ENCODE measurements at regions of chr2 and their contacts with region 1.

Region 1: DNA sequence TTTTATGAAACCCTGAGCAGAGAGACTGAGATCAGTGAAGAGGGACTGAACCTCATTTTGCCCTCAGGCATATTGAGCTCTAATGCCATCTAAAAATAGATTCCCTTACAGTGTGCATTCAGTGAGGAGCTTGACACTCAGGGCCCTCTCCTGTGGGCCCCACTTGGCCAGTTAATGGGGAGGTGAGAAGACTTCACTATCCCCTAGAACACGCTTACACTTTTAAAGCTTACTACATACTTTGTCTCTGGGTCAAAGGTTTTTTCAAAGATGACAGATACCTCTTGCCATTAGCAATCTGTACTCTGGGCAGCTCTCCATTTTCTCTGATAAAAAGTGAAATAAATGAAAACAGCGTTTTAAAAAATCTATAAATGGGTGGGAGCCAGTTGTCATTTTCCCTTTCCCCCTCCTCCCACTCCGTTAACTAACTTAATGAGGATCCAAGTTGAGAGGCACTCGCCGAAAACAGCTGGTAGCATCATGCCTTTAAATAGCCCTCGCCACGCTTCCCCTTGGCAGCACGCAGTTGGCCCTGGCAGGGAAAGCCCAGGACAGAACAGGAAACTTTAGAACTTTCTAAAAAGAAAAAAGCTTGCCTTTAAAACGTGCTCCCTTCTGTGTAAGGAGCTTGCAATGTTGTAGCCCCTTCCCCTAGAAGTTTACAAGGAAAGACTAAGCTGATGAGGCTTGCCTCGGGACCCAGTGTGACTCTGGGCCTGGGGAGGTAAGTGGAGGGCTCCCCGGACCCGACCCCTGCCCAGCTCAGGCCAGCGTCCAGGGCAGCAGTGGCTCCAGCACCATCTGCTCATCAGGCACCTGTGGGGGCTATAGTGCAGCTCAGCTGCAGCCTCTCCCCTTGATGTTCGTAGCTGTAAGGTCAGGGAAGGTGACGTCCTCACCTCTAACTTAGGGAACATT is 58.8 kb upstream of the FOSL2 start:
- DNase-seq: peak; percentile 81 to 90
- ATAC-seq: peak; percentile 79 to 82
- H3K4me3 ChIP-seq: peak overlapping the region in 1 of 4 donors; percentile 2
- H3K27ac ChIP-seq: peak overlapping the region; percentile 94 to 97 (median 96)
- H3K4me1 ChIP-seq: peaks cover 65% of the 10 kb centered on the region in 2 donors
- H3K27me3 ChIP-seq: no peaks in the 10 kb centered on the region
- CTCF ChIP-seq: no peak
- POLR2A ChIP-seq: peak; percentile 35 to 63

Region 2: GRCh38 chr2:27903649-27904404 is 430.0 kb before region 1 on chr2:
- in situ Hi-C with region 1: no loop called
- intact Hi-C with region 1: loop called (anchors 5 kb)
- DNase-seq: peak in 1 of 2 donors; percentile 34
- ATAC-seq: peak; percentile 35 to 50
- H3K4me3 ChIP-seq: no peak overlapping the region
- H3K27ac ChIP-seq: peak overlapping the region; percentile 74 to 86 (median 80)
- H3K4me1 ChIP-seq: peaks cover 42 to 46% of the 10 kb centered on the region in 2 donors
- H3K27me3 ChIP-seq: no peaks in the 10 kb centered on the region
- CTCF ChIP-seq: no peak
- POLR2A ChIP-seq: no peak

Region 3: GRCh38 chr2:27954771-27955383 is 379.0 kb before region 1 on chr2:
- in situ Hi-C with region 1: no loop called
- intact Hi-C with region 1: loop called (anchors 1 kb)
- DNase-seq: peak; percentile 70 to 78
- ATAC-seq: peak; percentile 90 to 93
- H3K4me3 ChIP-seq: peak overlapping the region in 2 of 4 donors; percentile 3 to 6
- H3K27ac ChIP-seq: peak overlapping the region; percentile 72 to 81 (median 76)
- H3K4me1 ChIP-seq: peaks cover 52 to 57% of the 10 kb centered on the region in 2 donors
- H3K27me3 ChIP-seq: no peaks in the 10 kb centered on the region
- CTCF ChIP-seq: peak in 4 of 5 experiments; percentile 16 to 39 (median 38)
- POLR2A ChIP-seq: no peak

Region 4: DNA sequence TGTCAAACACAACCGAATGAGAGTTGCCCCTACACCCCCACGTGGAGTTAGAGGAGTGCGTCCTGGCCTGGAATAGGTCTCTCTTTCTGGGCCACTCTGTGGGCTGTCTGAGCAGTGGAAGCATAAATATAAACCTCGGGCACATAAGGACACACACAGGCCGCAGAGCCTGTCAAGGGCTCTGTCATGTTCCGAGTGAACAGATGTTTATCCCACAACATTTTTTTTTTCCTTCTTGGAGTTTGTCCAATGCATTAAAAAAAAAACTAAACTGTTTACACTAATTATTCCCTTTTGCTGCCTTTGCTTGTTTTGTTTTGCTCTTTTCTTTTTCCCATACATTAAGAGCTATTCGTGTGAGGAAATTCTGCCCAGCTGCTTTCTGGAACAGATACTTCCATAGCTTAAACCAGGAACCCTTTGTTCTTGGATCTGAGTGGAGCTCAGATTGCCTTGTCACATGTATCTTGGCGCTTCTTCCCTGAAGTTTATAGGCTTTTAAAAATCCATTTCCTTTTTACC is 169.5 kb before region 1 on chr2:
- in situ Hi-C with region 1: no loop called
- intact Hi-C with region 1: loop called (anchors 5 kb)
- DNase-seq: peak; percentile 68 to 88
- ATAC-seq: peak; percentile 81 to 86
- H3K4me3 ChIP-seq: peak overlapping the region in 3 of 4 donors; percentile 17 to 25 (median 24)
- H3K27ac ChIP-seq: peak overlapping the region; percentile 89 to 96 (median 92)
- H3K4me1 ChIP-seq: peaks cover 36 to 61% of the 10 kb centered on the region in 2 donors
- H3K27me3 ChIP-seq: no peaks in the 10 kb centered on the region
- CTCF ChIP-seq: no peak
- POLR2A ChIP-seq: peak in 1 of 2 donors; percentile 50

Region 5: GRCh38 chr2:28201671-28202180 is 132.1 kb before region 1 on chr2:
- in situ Hi-C with region 1: no loop called
- intact Hi-C with region 1: loop called (anchors 2 kb)
- DNase-seq: peak; percentile 85 to 93
- ATAC-seq: peak; percentile 92 to 94
- H3K4me3 ChIP-seq: no peak overlapping the region
- H3K27ac ChIP-seq: peak overlapping the region; percentile 75 to 87 (median 82)
- H3K4me1 ChIP-seq: peaks cover 25 to 38% of the 10 kb centered on the region in 2 donors
- H3K27me3 ChIP-seq: no peaks in the 10 kb centered on the region
- CTCF ChIP-seq: no peak
- POLR2A ChIP-seq: peak; percentile 47 to 64

Region 6: DNA sequence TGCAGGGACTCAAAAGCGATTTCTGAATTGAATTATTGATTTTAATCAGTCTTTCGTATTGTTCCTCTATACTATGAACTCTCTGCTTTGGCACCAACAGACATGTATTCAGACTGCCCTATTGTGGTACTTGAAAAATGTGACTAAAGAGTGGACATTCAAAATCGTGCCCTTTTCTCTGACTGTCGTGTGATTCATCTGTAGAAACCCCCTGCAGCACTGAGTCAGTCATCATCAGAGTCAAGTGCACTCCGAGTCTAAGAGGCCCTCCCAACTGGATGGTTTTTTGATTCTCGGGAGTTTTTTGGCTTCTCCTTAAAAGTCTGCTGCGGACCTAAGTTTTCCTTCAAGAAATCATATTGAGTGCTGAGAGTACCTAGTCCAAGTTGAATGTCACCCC is 37.6 kb before region 1 on chr2:
- in situ Hi-C with region 1: no loop called
- intact Hi-C with region 1: no loop called
- DNase-seq: no peak
- ATAC-seq: no peak
- H3K4me3 ChIP-seq: no peak overlapping the region
- H3K27ac ChIP-seq: no peak overlapping the region
- H3K4me1 ChIP-seq: no peaks in the 10 kb centered on the region
- H3K27me3 ChIP-seq: no peaks in the 10 kb centered on the region
- CTCF ChIP-seq: no peak
- POLR2A ChIP-seq: no peak